ENCODE measurements at regions of chr12 and their contacts with region 1.

Region 1: DNA sequence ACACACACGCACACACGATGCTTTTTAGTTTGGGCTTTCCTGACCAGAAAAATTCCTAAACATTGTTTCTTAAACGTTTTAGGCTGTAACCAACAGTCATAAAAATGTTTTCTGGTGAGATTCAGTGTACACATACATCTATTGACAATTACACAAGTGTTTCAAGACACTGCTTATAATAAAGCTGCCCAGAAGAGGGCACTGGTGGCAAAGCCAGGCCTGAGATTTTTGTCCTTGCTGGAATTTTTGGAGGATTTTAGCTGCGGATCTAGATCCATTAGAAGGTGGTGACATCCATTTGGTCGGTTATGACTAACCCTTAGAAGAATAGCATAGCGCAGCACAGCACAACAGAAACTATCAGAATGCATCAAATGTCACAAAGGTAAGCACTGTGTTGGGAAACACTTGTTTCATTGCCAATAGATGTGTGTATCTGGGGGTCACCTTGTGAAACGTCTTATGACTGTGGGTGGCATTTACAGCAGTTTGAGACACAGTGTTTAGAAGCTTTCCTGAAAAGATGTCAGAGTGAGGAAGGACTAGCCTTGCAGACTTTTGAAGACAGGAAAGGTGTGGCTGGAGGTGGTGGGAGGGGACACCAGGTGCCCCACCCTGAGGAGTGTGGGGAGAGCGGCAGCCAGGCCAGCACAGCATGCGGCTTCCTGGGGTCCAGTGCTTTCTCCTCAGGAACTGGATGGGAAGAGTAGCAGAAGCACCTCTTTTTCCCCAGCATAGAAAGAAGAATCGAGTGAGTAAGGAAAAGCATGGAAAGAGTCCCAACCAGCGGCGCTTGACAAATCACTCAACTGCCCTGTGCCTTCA is 54.7 kb upstream of the FKBP4 start:
- DNase-seq: peak; percentile 34
- ATAC-seq: peak; percentile 83
- H3K4me3 ChIP-seq: no peak overlapping the region
- H3K27ac ChIP-seq: no peak overlapping the region
- H3K4me1 ChIP-seq: no peaks in the 10 kb centered on the region
- H3K27me3 ChIP-seq: peaks cover 43% of the 10 kb centered on the region
- CTCF ChIP-seq: peak; percentile 78
- POLR2A ChIP-seq: no peak
- RAD21 ChIP-seq: peak; percentile 77

Region 2: DNA sequence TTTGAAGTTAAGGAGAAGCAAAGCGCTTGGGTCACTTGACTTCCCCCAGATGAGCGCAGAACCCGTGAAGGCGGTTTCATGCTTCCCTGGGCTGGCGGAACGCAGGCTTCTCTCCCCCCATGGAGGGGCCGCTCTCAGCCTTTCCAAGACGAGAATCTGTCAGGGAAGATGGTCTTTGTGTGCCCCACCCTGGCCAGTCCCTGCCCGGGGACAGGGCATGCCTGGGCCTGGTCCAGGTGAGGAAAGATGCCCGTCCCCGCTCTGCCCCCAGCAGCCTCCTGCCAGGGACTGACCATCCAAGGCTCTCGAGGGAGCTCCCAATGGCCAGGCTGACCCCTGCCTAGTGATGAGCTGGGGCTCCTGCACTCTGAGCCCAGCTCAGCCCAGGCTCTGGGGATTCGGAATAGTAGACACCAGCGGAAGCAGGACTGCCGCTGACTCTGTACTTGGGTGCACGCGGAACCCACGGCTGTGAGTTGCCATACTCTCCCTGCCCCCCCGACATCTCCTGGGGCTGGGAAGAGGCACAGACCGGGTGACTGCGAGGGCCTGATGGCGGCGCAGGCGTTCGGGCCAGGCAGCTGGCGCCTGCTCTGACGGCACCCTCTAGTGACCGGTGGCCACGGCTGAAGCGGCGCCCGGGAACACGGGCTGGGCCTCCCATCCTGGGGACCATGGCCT is 87.5 kb before region 1 on chr12:
- CTCF ChIA-PET with region 1: no interaction called
- POLR2A ChIA-PET with region 1: no interaction called
- dilution Hi-C with region 1: no loop called
- in situ Hi-C with region 1: no loop called
- intact Hi-C with region 1: no loop called
- DNase-seq: no peak
- ATAC-seq: no peak
- H3K4me3 ChIP-seq: no peak overlapping the region
- H3K27ac ChIP-seq: no peak overlapping the region
- H3K4me1 ChIP-seq: no peaks in the 10 kb centered on the region
- H3K27me3 ChIP-seq: no peaks in the 10 kb centered on the region
- CTCF ChIP-seq: 0 out of 2 replicates have a peak, but pooled peaks have one; percentile 7
- POLR2A ChIP-seq: no peak
- RAD21 ChIP-seq: no peak

Region 3: DNA sequence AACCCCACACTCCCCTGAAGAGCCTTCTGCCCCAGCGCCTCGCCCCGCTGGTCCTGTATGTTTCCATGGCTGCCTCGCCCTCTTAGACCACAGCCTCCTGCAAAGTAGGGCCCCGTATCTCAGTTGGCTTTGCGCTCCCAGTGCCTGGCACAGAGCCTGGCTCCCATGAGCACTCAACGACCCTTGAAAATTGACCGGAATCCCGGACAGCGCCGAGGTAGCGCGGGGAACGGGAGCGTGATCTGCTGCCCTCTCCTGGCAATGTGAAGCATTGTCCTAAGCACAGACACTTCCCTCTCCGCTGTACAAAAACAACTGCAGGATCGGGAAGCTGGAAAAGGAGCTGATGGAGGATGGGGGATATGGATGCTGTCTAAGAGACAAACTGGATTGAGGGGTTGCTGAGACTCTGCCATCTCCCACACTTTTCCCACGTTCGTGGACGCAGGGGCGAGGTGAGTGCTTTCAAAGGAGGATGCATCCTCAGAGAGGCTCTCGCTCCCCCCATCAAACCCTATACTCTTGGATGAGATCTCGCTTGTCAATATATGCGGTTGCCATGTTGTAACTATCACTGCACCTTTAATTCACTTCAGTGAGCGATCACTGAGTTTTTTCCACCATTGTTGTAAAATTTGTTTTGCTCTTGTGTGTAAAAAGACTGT is 44.0 kb after region 1 on chr12:
- CTCF ChIA-PET with region 1: interaction called, 8 read pairs
- POLR2A ChIA-PET with region 1: no interaction called
- dilution Hi-C with region 1: no loop called
- in situ Hi-C with region 1: no loop called
- intact Hi-C with region 1: loop called (anchors 1 kb)
- DNase-seq: peak; percentile 44
- ATAC-seq: peak; percentile 99
- H3K4me3 ChIP-seq: no peak overlapping the region
- H3K27ac ChIP-seq: no peak overlapping the region
- H3K4me1 ChIP-seq: no peaks in the 10 kb centered on the region
- H3K27me3 ChIP-seq: peaks cover 44% of the 10 kb centered on the region
- CTCF ChIP-seq: peak; percentile 81
- POLR2A ChIP-seq: no peak
- RAD21 ChIP-seq: peak; percentile 71

Region 4: GRCh38 chr12:2812290-2813213 is 72.5 kb after region 1 on chr12 and contains the start of gene ITFG2:
- CTCF ChIA-PET with region 1: interaction called, 4 read pairs
- POLR2A ChIA-PET with region 1: no interaction called
- dilution Hi-C with region 1: no loop called
- in situ Hi-C with region 1: no loop called
- intact Hi-C with region 1: loop called (anchors 1 kb)
- DNase-seq: peak; percentile 98
- ATAC-seq: peak; percentile 98
- H3K4me3 ChIP-seq: peak within 1 kb of the TSS; percentile 61
- H3K27ac ChIP-seq: peak within 1 kb of the TSS; percentile 92
- H3K4me1 ChIP-seq: no peaks in the 10 kb centered on the region
- H3K27me3 ChIP-seq: no peaks in the 10 kb centered on the region
- CTCF ChIP-seq: no peak
- POLR2A ChIP-seq: peak; percentile 84
- RAD21 ChIP-seq: no peak
- total RNA-seq, gene ITFG2: 20.0 and 20.3 TPM in 2 replicates

Region 5: DNA sequence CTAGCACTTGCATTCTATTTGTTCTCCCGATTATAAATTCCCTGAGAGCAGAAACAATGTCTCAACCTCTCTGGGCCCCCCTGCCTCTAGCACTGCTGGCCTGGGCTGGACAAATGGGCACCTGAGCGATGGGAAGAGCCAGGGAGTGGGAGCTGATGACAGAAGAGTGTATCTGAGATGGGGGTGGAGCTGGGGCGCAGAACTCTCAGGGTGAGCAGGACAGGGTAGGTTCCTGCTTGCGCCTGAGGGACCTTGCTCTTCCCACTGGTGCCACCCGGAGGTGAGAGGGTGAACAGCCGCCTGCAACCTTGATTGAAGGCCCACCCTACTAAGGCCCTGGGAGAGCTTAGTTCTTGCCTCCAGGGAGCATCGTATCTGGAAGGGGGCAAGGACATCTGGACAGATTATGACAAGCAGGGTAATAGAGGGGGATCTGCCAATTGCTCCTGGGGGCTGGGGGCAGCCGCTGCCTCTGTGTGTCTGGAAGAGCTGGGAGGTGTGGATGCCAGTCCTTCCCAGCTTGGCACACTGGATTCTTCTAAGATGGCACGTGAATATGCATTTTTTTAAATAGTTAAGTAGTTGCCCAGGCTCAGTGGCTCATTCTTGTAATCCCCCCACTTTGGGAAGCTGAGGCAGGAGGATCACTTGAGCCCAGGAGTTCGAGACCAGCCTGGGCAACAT is 294.2 kb after region 1 on chr12:
- CTCF ChIA-PET with region 1: no interaction called
- POLR2A ChIA-PET with region 1: no interaction called
- dilution Hi-C with region 1: no loop called
- in situ Hi-C with region 1: no loop called
- intact Hi-C with region 1: loop called (anchors 2 kb)
- DNase-seq: peak; percentile 71
- ATAC-seq: peak; percentile 98
- H3K4me3 ChIP-seq: no peak overlapping the region
- H3K27ac ChIP-seq: no peak overlapping the region
- H3K4me1 ChIP-seq: peaks cover 3% of the 10 kb centered on the region; the same call in 1 of the 2 replicates
- H3K27me3 ChIP-seq: no peaks in the 10 kb centered on the region
- CTCF ChIP-seq: peak; percentile 73
- POLR2A ChIP-seq: no peak
- RAD21 ChIP-seq: peak; percentile 83